ENCODE measurements at regions of chr14 and their contacts with region 1.

Region 1: DNA sequence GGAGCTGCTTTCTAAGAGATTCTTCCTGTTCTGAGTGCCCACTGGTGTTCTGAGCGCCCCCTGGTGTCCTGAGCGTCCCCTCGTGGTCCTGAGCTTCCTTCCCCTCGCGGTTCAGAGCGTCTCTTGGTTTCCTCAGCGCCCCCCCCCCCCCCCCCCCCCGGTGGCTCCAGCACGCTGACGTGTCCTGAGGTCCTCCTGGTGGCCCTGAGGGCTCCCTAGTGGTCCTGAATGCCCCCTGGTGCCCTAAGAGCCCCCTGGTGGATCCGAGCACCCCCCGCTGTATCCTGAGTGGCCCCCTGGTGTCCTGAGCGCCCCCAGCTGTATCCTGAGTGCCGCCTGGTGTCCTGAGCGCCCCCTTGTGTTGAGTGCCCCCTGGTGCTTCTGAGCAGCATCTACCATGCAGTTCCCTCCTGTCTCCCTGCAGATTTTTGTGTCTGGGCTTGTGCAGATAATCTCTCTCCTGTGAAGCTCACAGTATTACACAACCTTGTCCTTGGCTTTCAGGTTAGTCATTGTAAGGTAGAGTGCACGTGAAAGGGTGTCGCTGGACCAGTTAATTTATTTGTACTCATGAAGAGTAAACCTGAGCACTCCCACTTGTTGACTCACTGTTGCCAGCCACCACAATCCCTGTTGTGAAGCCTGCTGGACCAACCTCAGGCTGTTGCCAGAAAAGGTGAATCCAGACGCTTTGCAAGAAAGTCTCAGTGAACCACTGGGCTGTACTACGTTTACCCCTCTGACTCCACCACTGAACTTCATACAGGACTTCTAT is 1168.4 kb downstream of the TMEM121 start:
- DNase-seq: peak; percentile 46
- ATAC-seq: peak; percentile 53
- H3K4me3 Mint-ChIP-seq: peak overlapping the region; percentile 29
- H3K27ac Mint-ChIP-seq: no peak overlapping the region
- H3K4me1 Mint-ChIP-seq: peaks cover 24% of the 10 kb centered on the region
- H3K27me3 Mint-ChIP-seq: no peaks in the 10 kb centered on the region
- CTCF ChIP-seq: no peak

Region 2: GRCh38 chr14:106738075-106738474 is 43.3 kb after region 1 on chr14:
- CTCF ChIA-PET with region 1: interaction called, 18 read pairs
- POLR2A ChIA-PET with region 1: no interaction called
- intact Hi-C with region 1: no loop called
- DNase-seq: no peak
- ATAC-seq: no peak
- H3K4me3 Mint-ChIP-seq: no peak overlapping the region
- H3K27ac Mint-ChIP-seq: no peak overlapping the region
- H3K4me1 Mint-ChIP-seq: no peaks in the 10 kb centered on the region
- H3K27me3 Mint-ChIP-seq: no peaks in the 10 kb centered on the region
- CTCF ChIP-seq: no peak

Measured in activated B cell treated with CpG ODN at 0.5 μM for 24 hours (primary cell).